ENCODE measurements at regions of chr12 and their contacts with region 1.

Region 1: GRCh38 chr12:100229058-100229637 is 28.5 kb downstream of the ACTR6 start:
- DNase-seq: peak; percentile 76
- ATAC-seq: peak; percentile 81
- H3K4me3 ChIP-seq: peak overlapping the region; percentile 16; the same call in 1 of the 2 replicates
- H3K27ac ChIP-seq: peak overlapping the region; percentile 72
- H3K4me1 ChIP-seq: peaks cover 34% of the 10 kb centered on the region
- H3K27me3 ChIP-seq: no peaks in the 10 kb centered on the region
- CTCF ChIP-seq: peak; percentile 79

Region 2: GRCh38 chr12:99984271-99985128 is 244.6 kb before region 1 on chr12 and contains the start of gene ANKS1B:
- CTCF ChIA-PET with region 1: no interaction called
- POLR2A ChIA-PET with region 1: no interaction called
- intact Hi-C with region 1: loop called (anchors 10 kb)
- DNase-seq: peak; percentile 49
- ATAC-seq: peak; percentile 82
- H3K4me3 ChIP-seq: peak within 1 kb of the TSS; percentile 73
- H3K27ac ChIP-seq: no peak within 1 kb of the TSS
- H3K4me1 ChIP-seq: 0 out of 2 replicates have a peak, but pooled peaks cover 4% of the 10 kb centered on the region
- H3K27me3 ChIP-seq: peaks cover 59% of the 10 kb centered on the region
- CTCF ChIP-seq: no peak
- total RNA-seq, gene ANKS1B: 0.07 and 0.98 TPM in 2 replicates

Region 3: DNA sequence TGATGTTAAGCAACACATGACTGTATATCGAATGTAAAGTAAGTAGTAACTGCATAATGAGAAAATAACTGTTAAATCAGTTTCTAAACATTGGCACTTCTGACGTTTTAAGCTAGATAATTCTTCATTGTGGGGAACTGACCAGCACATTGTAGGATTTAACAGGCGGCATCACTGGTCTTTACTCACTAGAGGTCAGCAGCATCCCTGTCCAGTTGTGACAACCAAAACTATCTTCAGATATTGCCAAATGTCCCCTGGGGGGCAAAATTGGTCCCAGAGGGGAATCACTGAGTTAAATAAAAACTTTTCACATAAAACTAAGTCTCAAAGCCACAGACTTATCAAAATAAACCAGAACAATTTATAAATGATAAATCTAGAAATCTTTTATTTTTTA is 151.8 kb before region 1 on chr12:
- CTCF ChIA-PET with region 1: interaction called, 5 read pairs
- POLR2A ChIA-PET with region 1: no interaction called
- intact Hi-C with region 1: loop called (anchors 5 kb)
- DNase-seq: peak; percentile 10
- ATAC-seq: peak; percentile 72
- H3K4me3 ChIP-seq: no peak overlapping the region
- H3K27ac ChIP-seq: no peak overlapping the region
- H3K4me1 ChIP-seq: peaks cover 7% of the 10 kb centered on the region; the same call in 1 of the 2 replicates
- H3K27me3 ChIP-seq: no peaks in the 10 kb centered on the region
- CTCF ChIP-seq: peak; percentile 48

Region 4: DNA sequence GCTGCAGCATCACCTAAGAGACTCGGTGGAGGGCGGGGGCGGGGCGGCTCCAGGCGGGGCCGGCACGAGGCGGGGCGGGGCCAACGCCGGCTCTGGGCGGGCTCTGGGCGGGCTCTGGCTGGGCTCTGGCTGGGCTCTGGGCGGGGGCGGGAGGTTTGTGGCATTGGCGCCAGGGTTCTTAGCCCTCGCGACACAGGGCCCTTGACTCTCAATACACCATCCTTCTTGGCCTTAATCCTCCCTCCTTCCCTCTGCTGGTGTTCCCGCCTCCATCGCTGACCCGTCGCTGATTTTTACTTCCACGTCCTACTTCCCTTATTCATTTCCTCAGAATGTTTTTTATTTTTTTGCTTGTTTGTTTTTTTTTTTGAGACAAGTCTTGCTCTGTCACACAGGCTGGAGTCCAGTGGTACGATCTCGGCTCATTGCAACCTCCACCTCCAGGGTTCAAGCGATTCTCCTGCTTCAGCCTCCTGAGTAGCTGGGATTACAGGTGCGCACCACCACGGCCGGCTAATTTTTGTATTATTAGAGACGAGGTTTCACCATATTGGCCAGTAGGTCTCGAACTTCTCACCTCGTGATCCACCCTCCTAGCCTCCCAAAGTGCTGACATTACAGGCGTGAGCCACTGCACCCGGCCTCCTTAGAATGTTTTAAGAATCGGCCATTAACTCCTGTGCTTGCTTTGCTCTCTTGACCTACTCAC is 86.1 kb before region 1 on chr12 and contains the start of gene BLTP3B:
- CTCF ChIA-PET with region 1: interaction called, 5 read pairs
- POLR2A ChIA-PET with region 1: no interaction called
- intact Hi-C with region 1: loop called (anchors 2 kb)
- DNase-seq: peak; percentile 76
- ATAC-seq: peak; percentile 78
- H3K4me3 ChIP-seq: peak within 1 kb of the TSS; percentile 98
- H3K27ac ChIP-seq: peak within 1 kb of the TSS; percentile 64
- H3K4me1 ChIP-seq: peaks cover 32% of the 10 kb centered on the region
- H3K27me3 ChIP-seq: no peaks in the 10 kb centered on the region
- CTCF ChIP-seq: no peak
- total RNA-seq, gene BLTP3B: 29.0 and 32.0 TPM in 2 replicates

Region 5: GRCh38 chr12:100173111-100173510 is 56.0 kb before region 1 on chr12:
- CTCF ChIA-PET with region 1: no interaction called
- POLR2A ChIA-PET with region 1: interaction called, 6 read pairs
- intact Hi-C with region 1: loop called (anchors 2 kb)
- DNase-seq: no peak
- ATAC-seq: no peak
- H3K4me3 ChIP-seq: no peak overlapping the region
- H3K27ac ChIP-seq: no peak overlapping the region
- H3K4me1 ChIP-seq: no peaks in the 10 kb centered on the region
- H3K27me3 ChIP-seq: no peaks in the 10 kb centered on the region
- CTCF ChIP-seq: no peak

Region 6: GRCh38 chr12:100200463-100201181 is 28.5 kb before region 1 on chr12 and contains the start of gene ACTR6:
- CTCF ChIA-PET with region 1: interaction called, 7 read pairs
- POLR2A ChIA-PET with region 1: interaction called, 5 read pairs
- intact Hi-C with region 1: loop called (anchors 1 kb)
- DNase-seq: peak; percentile 99
- ATAC-seq: peak; percentile 81
- H3K4me3 ChIP-seq: peak within 1 kb of the TSS; percentile 85
- H3K27ac ChIP-seq: peak within 1 kb of the TSS; percentile 33
- H3K4me1 ChIP-seq: peaks cover 36% of the 10 kb centered on the region
- H3K27me3 ChIP-seq: no peaks in the 10 kb centered on the region
- CTCF ChIP-seq: no peak
- total RNA-seq, gene ACTR6: 18.4 and 21.2 TPM in 2 replicates

Region 7: DNA sequence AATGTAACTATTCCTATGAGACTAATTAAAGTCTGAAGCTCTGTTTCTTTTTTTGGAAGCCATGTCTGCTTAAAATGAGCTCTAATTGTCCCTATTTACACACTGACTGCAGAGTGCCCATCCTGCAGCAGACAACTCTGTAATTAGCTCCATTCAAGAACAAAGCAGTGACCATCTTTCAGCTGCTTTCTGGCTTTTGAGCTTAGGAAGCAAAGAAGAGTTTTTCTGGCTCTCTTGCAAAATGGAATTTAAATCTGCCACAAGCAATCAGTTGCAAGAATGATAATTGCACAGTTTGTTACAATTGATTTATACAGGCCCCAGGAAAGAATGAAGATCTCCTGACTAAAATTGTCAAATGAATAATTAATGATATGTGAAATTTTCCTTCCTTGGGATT is 427.7 kb after region 1 on chr12:
- CTCF ChIA-PET with region 1: interaction called, 10 read pairs
- POLR2A ChIA-PET with region 1: no interaction called
- intact Hi-C with region 1: no loop called
- DNase-seq: no peak
- ATAC-seq: no peak
- H3K4me3 ChIP-seq: no peak overlapping the region
- H3K27ac ChIP-seq: no peak overlapping the region
- H3K4me1 ChIP-seq: no peaks in the 10 kb centered on the region
- H3K27me3 ChIP-seq: peaks cover 39% of the 10 kb centered on the region
- CTCF ChIP-seq: no peak